Activated CD4-positive, alpha-beta T cell treated with anti-CD3 and anti-CD28 coated beads for 36 hours (primary cell): ENCODE measurements at regions of chr4 and their contacts with region 1.

Region 1: GRCh38 chr4:39527273-39528060 is at the start of gene UGDH:
- DNase-seq: peak; percentile 95
- ATAC-seq: peak; percentile 99
- H3K4me3 Mint-ChIP-seq: peak within 1 kb of the TSS; percentile 87
- H3K27ac Mint-ChIP-seq: peak within 1 kb of the TSS; percentile 97
- H3K4me1 Mint-ChIP-seq: peaks cover 16% of the 10 kb centered on the region
- H3K27me3 Mint-ChIP-seq: no peaks in the 10 kb centered on the region
- total RNA-seq, gene UGDH: 30.2 to 31.3 TPM

Region 2: GRCh38 chr4:38663801-38664705 is 863.4 kb before region 1 on chr4 and contains the start of gene KLF3:
- CTCF ChIA-PET with region 1: no interaction called
- POLR2A ChIA-PET with region 1: no interaction called
- intact Hi-C with region 1: loop called in 1 of 2 experiments (anchors 10 kb)
- DNase-seq: peak; percentile 84
- ATAC-seq: peak; percentile 62
- H3K4me3 Mint-ChIP-seq: peak within 1 kb of the TSS; percentile 88
- H3K27ac Mint-ChIP-seq: peak within 1 kb of the TSS; percentile 78
- H3K4me1 Mint-ChIP-seq: peaks cover 61% of the 10 kb centered on the region
- H3K27me3 Mint-ChIP-seq: no peaks in the 10 kb centered on the region
- total RNA-seq, gene KLF3: 6.1 to 6.2 TPM

Region 3: GRCh38 chr4:39181905-39182638 is 345.4 kb before region 1 on chr4 and contains the start of gene WDR19:
- CTCF ChIA-PET with region 1: no interaction called
- POLR2A ChIA-PET with region 1: no interaction called
- intact Hi-C with region 1: loop called in 1 of 2 experiments (anchors 1 kb)
- DNase-seq: peak; percentile 99
- ATAC-seq: peak; percentile 99
- H3K4me3 Mint-ChIP-seq: no peak within 1 kb of the TSS
- H3K27ac Mint-ChIP-seq: no peak within 1 kb of the TSS
- H3K4me1 Mint-ChIP-seq: peaks cover 8% of the 10 kb centered on the region
- H3K27me3 Mint-ChIP-seq: peaks cover 3% of the 10 kb centered on the region
- total RNA-seq, gene WDR19: 12.1 to 16.2 TPM

Region 4: GRCh38 chr4:39469429-39470077 is 57.9 kb before region 1 on chr4:
- CTCF ChIA-PET with region 1: interaction called, 7 read pairs
- POLR2A ChIA-PET with region 1: no interaction called
- intact Hi-C with region 1: loop called in 1 of 2 experiments (anchors 1 kb)
- DNase-seq: peak; percentile 18
- ATAC-seq: peak; percentile 76
- H3K4me3 Mint-ChIP-seq: no peak overlapping the region
- H3K27ac Mint-ChIP-seq: peak overlapping the region; percentile 66
- H3K4me1 Mint-ChIP-seq: peaks cover 20% of the 10 kb centered on the region
- H3K27me3 Mint-ChIP-seq: no peaks in the 10 kb centered on the region

Region 5: GRCh38 chr4:39638354-39639240 is 111.1 kb after region 1 on chr4 and contains the start of gene SMIM14:
- CTCF ChIA-PET with region 1: interaction called, 3 read pairs
- POLR2A ChIA-PET with region 1: interaction called, 7 read pairs
- intact Hi-C with region 1: loop called (anchors 1 to 2 kb)
- DNase-seq: peak; percentile 94
- ATAC-seq: peak; percentile 87
- H3K4me3 Mint-ChIP-seq: peak within 1 kb of the TSS; percentile 83
- H3K27ac Mint-ChIP-seq: peak within 1 kb of the TSS; percentile 86
- H3K4me1 Mint-ChIP-seq: peaks cover 33% of the 10 kb centered on the region
- H3K27me3 Mint-ChIP-seq: no peaks in the 10 kb centered on the region
- total RNA-seq, gene SMIM14: 1.4 to 2.0 TPM